Esophagus muscularis mucosa (tissue), 4 donors: ENCODE measurements at regions of chr9 and their contacts with region 1.

Region 1: GRCh38 chr9:93134015-93134739 is at the start of gene NINJ1:
- DNase-seq: no peak
- H3K4me3 ChIP-seq: peak within 1 kb of the TSS; percentile 81 to 91 (median 88)
- H3K27ac ChIP-seq: peak within 1 kb of the TSS; percentile 98 to 99 (median 99)
- H3K4me1 ChIP-seq: peaks cover 53 to 68% (median 62%) of the 10 kb centered on the region in 4 donors
- H3K27me3 ChIP-seq: no peaks in the 10 kb centered on the region
- CTCF ChIP-seq: peak in 1 of 3 experiments; percentile 24
- EP300 ChIP-seq: no peak
- POLR2A ChIP-seq: peak; percentile 56
- total RNA-seq, gene NINJ1: 69.3 to 90.6 (median 72.7) TPM

Region 2: GRCh38 chr9:93095205-93096130 is 38.7 kb before region 1 on chr9:
- intact Hi-C with region 1: loop called (anchors 5 kb)
- DNase-seq: peak; percentile 100
- H3K4me3 ChIP-seq: peak overlapping the region; percentile 70 to 99 (median 78)
- H3K27ac ChIP-seq: peak overlapping the region; percentile 91 to 99 (median 94)
- H3K4me1 ChIP-seq: peaks cover 52 to 64% (median 61%) of the 10 kb centered on the region in 4 donors
- H3K27me3 ChIP-seq: no peaks in the 10 kb centered on the region
- CTCF ChIP-seq: no peak
- EP300 ChIP-seq: no peak
- POLR2A ChIP-seq: peak; percentile 85